ENCODE measurements at regions of chr16 and their contacts with region 1.

Region 1: DNA sequence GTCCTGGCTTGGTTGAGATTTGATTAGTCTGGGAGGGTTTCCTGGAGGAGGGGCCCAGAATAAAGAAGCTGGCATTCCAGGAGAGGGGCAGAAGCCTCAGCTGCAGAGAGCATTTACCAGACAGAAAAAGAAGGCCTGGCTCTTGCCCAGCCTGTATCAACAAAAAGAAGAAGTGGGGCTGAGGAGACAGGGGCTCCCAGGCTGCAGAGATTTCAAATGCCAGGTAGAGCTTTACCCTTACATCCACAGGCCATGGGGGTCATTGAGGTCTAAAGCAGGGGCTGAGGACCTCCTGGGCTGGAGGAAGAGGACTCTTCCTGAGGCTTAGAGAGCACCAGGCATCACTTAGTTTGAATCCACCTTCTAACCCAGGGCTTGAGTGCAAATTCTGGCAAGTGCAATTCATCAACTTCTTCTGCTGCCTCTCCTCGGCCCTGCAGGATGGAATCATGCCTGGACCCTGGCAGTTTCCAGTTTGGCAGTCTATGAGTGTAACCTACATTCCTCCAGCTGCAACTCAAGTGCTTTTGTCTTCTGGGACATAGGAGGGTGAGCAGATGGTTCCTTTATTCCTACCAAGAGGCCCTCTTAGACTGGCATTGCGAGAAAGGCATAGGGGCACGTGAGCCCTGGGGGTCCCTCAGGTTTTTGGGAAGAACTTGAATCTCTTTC is 15.3 kb downstream of the CA7 start:
- DNase-seq: no peak

Region 2: GRCh38 chr16:66650707-66651473 is 208.6 kb before region 1 on chr16:
- intact Hi-C with region 1: loop called (anchors 10 kb)
- DNase-seq: peak; percentile 86

Measured in cardiac septum (tissue), 1 donor.